Naive thymus-derived CD4-positive, alpha-beta T cell (primary cell): ENCODE measurements at regions of chr1 and their contacts with region 1.

Region 1: DNA sequence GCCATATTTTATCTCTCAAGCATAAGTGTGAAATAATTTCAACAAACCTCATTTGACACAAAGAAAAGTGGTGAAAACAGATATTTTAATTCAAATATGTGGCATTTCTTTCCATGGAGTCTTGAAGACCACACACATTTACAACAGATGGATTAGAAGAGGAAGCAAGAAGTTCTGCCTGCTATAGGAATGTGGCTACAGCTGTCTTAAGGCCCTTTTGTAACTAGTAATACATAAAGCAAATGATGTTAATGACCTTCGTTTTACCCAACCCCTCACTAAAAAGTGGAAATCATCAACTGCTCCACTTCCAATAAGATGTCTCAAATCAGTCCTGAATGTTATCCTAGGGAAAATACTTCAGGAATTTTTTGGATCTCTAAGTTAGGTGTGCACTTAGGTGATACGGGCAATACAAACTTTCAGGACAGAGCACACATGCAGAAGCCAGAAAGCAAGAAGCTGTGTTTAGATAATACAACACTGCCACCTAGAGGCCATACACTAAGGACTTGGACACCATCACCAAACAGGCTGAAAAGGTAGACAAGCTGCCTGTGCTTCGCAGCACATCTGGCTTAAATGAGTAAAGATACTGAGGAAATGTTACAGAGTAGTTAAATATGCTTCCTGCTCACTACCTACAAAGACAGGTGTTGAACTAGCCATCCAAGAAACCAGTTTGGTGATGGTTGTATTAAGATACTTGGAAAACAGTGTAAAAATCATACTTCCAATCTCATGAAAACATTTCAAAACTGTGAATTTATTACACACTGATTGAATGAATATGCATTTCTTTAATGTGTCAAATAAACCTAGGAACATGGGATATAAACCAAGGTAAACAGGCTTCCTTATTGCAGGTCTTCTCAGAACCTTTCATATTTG is 24.4 kb downstream of the RRAGC start:
- DNase-seq: peak in 7 of 9 donors; percentile 52 to 79 (median 71)
- ATAC-seq: peak; percentile 90
- H3K4me3 ChIP-seq: no peak overlapping the region
- H3K4me3 Mint-ChIP-seq: no peak overlapping the region
- H3K27ac ChIP-seq: no peak overlapping the region
- H3K27ac Mint-ChIP-seq: no peak overlapping the region
- H3K4me1 ChIP-seq: no peaks in the 10 kb centered on the region
- H3K4me1 Mint-ChIP-seq: peaks cover 0 to 6% (median under 1%) of the 10 kb centered on the region in 7 donors
- H3K27me3 ChIP-seq: peaks cover 0 to 9% of the 10 kb centered on the region in 2 donors
- H3K27me3 Mint-ChIP-seq: peaks cover 8 to 35% (median 12%) of the 10 kb centered on the region in 5 donors

Region 2: GRCh38 chr1:37890378-37891014 is 944.7 kb before region 1 on chr1:
- CTCF ChIA-PET with region 1: no interaction called
- POLR2A ChIA-PET with region 1: no interaction called
- intact Hi-C with region 1: loop called in 1 of 2 experiments (anchors 1 kb)
- DNase-seq: peak in 6 of 9 donors; percentile 22 to 49 (median 38)
- ATAC-seq: peak; percentile 64
- H3K4me3 ChIP-seq: no peak overlapping the region
- H3K4me3 Mint-ChIP-seq: no peak overlapping the region
- H3K27ac ChIP-seq: no peak overlapping the region
- H3K27ac Mint-ChIP-seq: peak overlapping the region in 4 of 9 donors; percentile 43 to 65 (median 50)
- H3K4me1 ChIP-seq: no peaks in the 10 kb centered on the region
- H3K4me1 Mint-ChIP-seq: peaks cover 0 to 10% (median 4%) of the 10 kb centered on the region in 7 donors
- H3K27me3 ChIP-seq: no peaks in the 10 kb centered on the region
- H3K27me3 Mint-ChIP-seq: no peaks in the 10 kb centered on the region

Region 3: DNA sequence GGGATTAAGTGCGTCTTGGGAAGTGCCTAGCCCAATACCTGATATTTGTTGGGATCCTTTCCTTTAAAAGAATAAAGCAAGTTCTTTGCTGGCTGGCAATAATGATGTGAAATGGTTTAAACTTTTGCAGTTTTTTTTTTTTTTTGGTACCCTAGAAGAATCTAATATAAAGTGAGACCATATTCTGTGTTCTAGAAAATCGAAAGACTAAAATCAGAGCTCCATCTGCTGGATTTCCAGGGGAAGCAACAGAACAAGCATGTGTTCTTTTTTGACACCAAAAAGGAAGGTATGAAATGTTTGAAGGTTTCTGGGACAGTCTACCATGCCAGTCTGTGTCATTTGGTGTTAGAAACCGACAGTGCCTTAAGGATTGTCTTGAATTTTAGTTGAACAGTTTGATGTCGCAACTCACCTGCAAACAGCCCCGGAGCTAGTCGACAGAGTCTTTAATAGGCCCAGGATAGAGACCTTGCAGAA is 816.3 kb before region 1 on chr1:
- CTCF ChIA-PET with region 1: interaction called, 3 read pairs
- POLR2A ChIA-PET with region 1: no interaction called
- intact Hi-C with region 1: loop called in 1 of 2 experiments (anchors 2 kb)
- DNase-seq: peak in 5 of 9 donors; percentile 17 to 49 (median 39)
- ATAC-seq: peak; percentile 68
- H3K4me3 ChIP-seq: no peak overlapping the region
- H3K4me3 Mint-ChIP-seq: no peak overlapping the region
- H3K27ac ChIP-seq: no peak overlapping the region
- H3K27ac Mint-ChIP-seq: peak overlapping the region in 2 of 9 donors; percentile 18 to 48
- H3K4me1 ChIP-seq: peaks cover 0 to 4% of the 10 kb centered on the region in 2 donors
- H3K4me1 Mint-ChIP-seq: peaks cover 5 to 28% (median 16%) of the 10 kb centered on the region in 7 donors
- H3K27me3 ChIP-seq: no peaks in the 10 kb centered on the region
- H3K27me3 Mint-ChIP-seq: no peaks in the 10 kb centered on the region

Region 4: DNA sequence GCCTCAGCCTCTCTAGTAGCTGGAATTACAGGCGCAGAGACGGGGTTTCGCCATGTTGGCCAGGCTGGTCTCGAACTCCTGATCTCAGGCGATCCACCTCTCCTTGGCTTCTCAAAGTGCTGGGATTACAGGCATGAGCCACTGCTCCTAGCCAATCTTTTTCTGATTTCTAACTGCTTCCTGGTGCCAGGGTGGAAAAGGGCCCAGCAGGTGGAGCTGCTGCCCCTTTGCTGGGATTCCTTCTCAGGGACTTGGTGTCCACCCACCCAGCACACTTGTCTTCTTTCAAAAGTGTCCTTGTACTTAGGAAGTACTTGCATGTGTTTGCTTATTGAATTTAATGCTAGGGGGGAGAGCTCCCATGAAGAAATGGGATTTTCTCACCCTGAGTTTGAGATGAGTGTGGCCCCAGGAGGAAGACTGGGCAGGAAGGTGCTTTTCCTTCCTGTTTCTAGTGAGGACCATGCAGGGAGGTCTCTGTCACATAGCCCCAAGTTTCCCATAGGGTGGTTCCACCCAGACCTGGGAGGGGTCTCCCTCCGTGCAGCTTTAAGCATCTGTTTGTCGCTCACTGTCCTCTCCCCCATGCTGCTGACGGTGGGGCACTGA is 808.5 kb before region 1 on chr1:
- CTCF ChIA-PET with region 1: interaction called, 3 read pairs
- POLR2A ChIA-PET with region 1: no interaction called
- intact Hi-C with region 1: loop called (anchors 1 to 2 kb)
- DNase-seq: no peak
- ATAC-seq: no peak
- H3K4me3 ChIP-seq: no peak overlapping the region
- H3K4me3 Mint-ChIP-seq: no peak overlapping the region
- H3K27ac ChIP-seq: no peak overlapping the region
- H3K27ac Mint-ChIP-seq: peak overlapping the region in 2 of 9 donors; percentile 38
- H3K4me1 ChIP-seq: peaks cover 12 to 32% of the 10 kb centered on the region in 2 donors
- H3K4me1 Mint-ChIP-seq: peaks cover 11 to 45% (median 25%) of the 10 kb centered on the region in 7 donors
- H3K27me3 ChIP-seq: no peaks in the 10 kb centered on the region
- H3K27me3 Mint-ChIP-seq: no peaks in the 10 kb centered on the region

Region 5: DNA sequence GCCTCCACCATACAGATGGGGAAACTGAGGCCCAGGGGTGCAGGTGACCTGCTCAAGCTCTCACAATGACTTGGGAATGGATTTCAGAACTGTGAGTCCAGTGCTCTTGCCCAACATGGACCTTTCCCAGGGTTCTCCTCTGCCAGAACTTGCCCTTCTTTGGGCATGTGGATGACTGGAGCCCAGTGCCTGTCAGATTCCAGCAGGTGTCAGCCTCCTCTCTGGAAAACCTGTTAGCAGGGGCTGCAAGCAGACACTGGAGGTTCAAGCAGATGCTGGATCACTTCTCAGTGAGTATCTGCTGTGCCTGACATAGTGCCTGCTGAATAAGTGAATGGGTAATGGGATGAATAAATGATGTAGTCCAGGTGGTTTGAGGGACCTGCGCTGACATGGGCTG is 474.4 kb before region 1 on chr1:
- CTCF ChIA-PET with region 1: no interaction called
- POLR2A ChIA-PET with region 1: no interaction called
- intact Hi-C with region 1: loop called in 1 of 2 experiments (anchors 2 kb)
- DNase-seq: peak in 1 of 9 donors; percentile 4
- ATAC-seq: no peak
- H3K4me3 ChIP-seq: no peak overlapping the region
- H3K4me3 Mint-ChIP-seq: no peak overlapping the region
- H3K27ac ChIP-seq: no peak overlapping the region
- H3K27ac Mint-ChIP-seq: no peak overlapping the region
- H3K4me1 ChIP-seq: no peaks in the 10 kb centered on the region
- H3K4me1 Mint-ChIP-seq: no peaks in the 10 kb centered on the region
- H3K27me3 ChIP-seq: no peaks in the 10 kb centered on the region
- H3K27me3 Mint-ChIP-seq: peaks cover 0 to 12% (median 8%) of the 10 kb centered on the region in 5 donors

Region 6: DNA sequence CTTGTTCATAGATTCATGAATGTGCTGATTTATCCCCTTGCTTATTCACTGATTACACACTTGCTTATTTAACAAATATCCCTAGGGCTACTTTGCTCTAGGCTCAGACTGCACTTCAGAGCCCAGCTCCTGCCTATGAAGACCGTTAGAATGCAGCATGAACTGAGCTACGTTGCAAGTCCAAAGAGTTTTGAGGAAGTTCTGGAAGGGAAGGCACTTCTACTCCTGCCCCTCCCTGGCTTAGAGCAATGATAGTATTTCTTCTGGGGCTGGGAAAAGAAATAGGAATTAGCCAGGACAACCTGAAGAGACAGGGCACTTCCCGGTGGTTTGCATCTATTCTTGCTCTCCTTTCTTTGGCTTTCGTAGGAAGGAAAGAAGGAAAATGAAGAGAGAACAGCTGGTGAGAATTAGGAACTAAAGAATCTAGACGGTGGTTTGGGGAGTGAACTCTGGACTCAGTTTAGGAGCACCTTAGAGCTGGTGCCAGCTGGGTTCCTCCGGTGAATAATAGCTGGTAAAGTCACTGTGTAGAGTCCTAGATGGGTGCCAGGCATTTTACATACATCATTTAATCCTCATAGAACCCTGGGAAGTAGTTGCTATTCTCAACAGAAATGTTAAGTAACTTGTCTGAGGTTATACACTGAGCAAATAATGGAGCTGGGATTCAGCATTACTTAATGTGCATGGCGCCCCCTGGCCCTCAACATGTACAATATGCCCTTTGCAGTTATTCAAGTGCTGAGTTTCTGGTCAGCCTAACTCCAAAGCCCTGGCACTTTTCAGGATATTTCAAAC is 256.9 kb after region 1 on chr1:
- CTCF ChIA-PET with region 1: interaction called, 14 read pairs
- POLR2A ChIA-PET with region 1: no interaction called
- intact Hi-C with region 1: loop called in 1 of 2 experiments (anchors 5 kb)
- DNase-seq: peak in 8 of 9 donors; percentile 33 to 61 (median 46)
- ATAC-seq: peak; percentile 82
- H3K4me3 ChIP-seq: no peak overlapping the region
- H3K4me3 Mint-ChIP-seq: peak overlapping the region in 1 of 10 donors; percentile 51
- H3K27ac ChIP-seq: no peak overlapping the region
- H3K27ac Mint-ChIP-seq: no peak overlapping the region
- H3K4me1 ChIP-seq: no peaks in the 10 kb centered on the region
- H3K4me1 Mint-ChIP-seq: peaks cover 4 to 11% (median 5%) of the 10 kb centered on the region in 7 donors
- H3K27me3 ChIP-seq: no peaks in the 10 kb centered on the region
- H3K27me3 Mint-ChIP-seq: peaks cover 0 to 5% (median 3%) of the 10 kb centered on the region in 5 donors